Mucosa of descending colon (tissue), 3 donors: ENCODE measurements at regions of chr6 and their contacts with region 1.

Region 1: DNA sequence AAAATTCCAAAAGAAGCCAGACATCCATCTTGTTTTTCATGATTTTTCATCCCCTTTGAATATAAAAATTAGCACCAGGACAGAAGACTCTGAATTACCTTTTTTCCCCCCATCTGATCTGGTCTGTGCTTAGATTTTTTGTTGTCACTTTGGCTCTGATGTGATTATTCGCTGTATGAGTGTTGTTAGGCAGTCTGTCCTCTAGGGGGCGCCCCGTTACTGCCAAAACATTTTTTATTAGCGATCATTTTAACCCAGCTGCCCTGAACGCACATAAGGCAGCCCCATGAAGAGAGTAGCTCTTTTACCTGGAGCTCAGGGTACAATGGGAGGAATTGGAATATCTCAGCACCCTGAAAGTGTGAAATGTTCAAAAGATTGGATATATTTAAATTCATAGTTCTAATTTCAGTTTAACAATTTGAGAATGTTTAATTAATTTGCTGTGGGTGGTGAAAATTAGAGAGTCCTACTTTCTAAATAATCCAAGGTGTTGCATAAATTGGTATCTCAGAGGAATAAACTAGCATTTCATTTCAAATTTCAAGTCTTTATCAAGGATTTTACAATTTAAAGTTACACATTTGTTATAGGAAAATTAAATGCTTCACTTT is 60.8 kb downstream of the PRPH2 start:
- DNase-seq: peak; percentile 56 to 88 (median 76)
- ATAC-seq: peak; percentile 94
- H3K4me3 ChIP-seq: no peak overlapping the region
- H3K4me1 ChIP-seq: no peaks in the 10 kb centered on the region
- CTCF ChIP-seq: peak; percentile 79

Region 2: GRCh38 chr6:42726485-42727086 is 64.9 kb after region 1 on chr6:
- intact Hi-C with region 1: loop called (anchors 5 to 10 kb)
- DNase-seq: peak in 2 of 3 donors; percentile 38 to 86
- ATAC-seq: peak; percentile 98
- H3K4me3 ChIP-seq: no peak overlapping the region
- H3K4me1 ChIP-seq: no peaks in the 10 kb centered on the region
- CTCF ChIP-seq: peak; percentile 84

Region 3: DNA sequence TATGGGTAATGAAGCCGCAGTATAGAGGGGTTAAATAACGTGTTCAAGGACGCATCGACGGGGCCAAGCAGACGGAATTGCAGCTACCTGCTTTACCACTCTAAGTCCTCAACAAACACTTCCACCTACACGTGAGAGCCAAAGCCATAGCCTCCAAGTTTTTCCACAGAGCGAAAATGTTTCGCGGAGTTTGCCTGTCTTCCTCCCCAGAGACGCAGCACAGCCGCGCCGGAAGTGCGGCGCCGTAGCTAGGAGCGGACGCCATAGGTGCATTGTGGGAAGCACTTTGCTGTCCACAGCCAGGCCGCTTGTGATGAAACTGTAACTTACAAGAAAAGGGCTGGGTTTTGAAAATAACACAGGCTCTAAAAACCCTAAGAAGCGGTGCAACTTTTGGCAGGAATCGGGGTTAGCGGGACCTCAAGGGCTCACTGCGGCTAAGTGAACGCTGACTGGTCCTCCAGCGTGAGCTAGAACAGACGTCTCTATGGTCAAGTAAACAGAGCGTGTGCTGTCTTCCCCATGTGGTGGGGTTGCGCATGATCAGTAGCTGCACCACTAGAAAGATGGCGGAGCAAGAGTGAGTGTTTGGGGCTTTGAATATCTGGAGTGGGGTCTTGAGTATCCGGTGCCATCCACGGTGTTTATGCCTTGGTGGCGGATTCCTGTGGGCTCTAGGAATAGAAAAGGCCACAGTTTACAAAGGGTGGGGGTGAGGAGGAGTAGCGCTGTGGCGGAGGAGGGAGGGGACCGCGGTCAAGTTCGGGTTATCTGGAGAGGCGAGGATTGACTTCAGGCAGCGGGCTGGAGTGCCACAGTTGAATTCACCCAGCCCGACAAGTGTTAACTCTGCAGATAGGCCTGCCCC is 218.0 kb after region 1 on chr6 and contains the start of gene RPL7L1:
- intact Hi-C with region 1: loop called (anchors 5 kb)
- DNase-seq: peak; percentile 83 to 87 (median 86)
- ATAC-seq: peak; percentile 98
- H3K4me3 ChIP-seq: peak within 1 kb of the TSS; percentile 46
- H3K4me1 ChIP-seq: peaks cover 14% of the 10 kb centered on the region
- CTCF ChIP-seq: peak; percentile 10
- total RNA-seq, gene RPL7L1: 47.4 to 61.4 (median 53.7) TPM

Region 4: DNA sequence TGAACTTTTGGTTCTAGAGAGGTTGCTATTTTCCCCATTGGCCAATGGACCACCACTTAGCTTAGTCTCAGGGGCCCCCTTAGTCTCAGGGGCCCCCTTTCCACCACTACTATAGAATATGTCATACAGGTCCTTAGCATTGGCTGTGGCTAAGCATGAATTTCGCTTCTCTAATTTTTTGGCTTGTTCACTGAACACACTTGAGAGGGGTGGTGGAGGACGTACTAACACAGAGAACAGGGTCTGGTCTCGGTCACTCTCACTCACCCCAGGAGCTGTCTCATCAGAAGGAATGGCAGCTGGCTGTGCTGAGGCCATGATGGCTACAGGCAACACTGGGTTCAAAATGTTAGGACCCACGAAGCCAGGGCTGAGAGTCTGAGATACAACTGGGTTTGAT is 677.5 kb after region 1 on chr6:
- intact Hi-C with region 1: no loop called
- DNase-seq: no peak
- ATAC-seq: no peak
- H3K4me3 ChIP-seq: no peak overlapping the region
- H3K4me1 ChIP-seq: peaks cover 7% of the 10 kb centered on the region
- CTCF ChIP-seq: no peak